Spleen (tissue), 13 donors: ENCODE measurements at regions of chr14 and their contacts with region 1.

Region 1: DNA sequence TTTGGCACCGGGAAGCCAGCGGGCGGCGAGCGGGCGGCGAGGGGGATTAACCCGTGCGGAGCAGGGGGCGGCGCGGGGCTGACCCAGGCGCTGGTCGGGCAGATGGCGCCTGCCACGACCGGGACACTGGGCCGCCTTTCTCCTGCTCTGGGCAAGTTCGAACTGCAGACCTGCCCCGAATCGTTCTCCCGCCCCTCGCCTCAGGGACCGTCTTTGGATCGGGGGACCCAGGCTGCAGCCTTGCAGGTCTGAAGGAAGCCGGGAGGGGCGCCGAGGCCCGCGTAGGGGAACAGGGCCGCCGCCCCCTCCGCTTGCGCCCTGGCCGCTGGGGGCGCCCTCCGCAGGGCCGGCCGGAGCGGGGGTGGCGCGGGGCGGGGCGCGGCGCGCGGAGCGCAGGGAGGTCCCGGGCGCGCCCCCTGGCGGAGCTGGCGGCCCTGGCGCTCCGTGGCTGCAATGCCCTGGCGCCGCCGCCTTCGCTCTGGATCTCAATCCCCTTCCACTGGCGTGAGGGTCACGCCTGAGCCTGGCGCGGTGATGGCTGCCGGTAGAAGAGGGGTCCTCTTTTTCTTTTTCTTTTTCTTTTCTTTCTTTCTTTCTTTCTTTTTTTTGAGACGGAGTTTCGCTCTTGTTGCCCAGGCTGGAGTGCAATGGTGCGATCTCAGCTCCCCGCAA is 449 bp upstream of the LTBP2 start:
- DNase-seq: peak; percentile 96
- H3K4me3 ChIP-seq: peak overlapping the region; percentile 66 to 96 (median 80)
- H3K27ac ChIP-seq: peak overlapping the region in 3 of 8 donors; percentile 55 to 74 (median 57)
- H3K4me1 ChIP-seq: peaks cover 13 to 78% (median 50%) of the 10 kb centered on the region in 6 donors
- H3K27me3 ChIP-seq: peaks cover 0 to 40% (median 18%) of the 10 kb centered on the region in 7 donors
- CTCF ChIP-seq: peak; percentile 27 to 91 (median 66)
- POLR2A ChIP-seq: no peak

Region 2: DNA sequence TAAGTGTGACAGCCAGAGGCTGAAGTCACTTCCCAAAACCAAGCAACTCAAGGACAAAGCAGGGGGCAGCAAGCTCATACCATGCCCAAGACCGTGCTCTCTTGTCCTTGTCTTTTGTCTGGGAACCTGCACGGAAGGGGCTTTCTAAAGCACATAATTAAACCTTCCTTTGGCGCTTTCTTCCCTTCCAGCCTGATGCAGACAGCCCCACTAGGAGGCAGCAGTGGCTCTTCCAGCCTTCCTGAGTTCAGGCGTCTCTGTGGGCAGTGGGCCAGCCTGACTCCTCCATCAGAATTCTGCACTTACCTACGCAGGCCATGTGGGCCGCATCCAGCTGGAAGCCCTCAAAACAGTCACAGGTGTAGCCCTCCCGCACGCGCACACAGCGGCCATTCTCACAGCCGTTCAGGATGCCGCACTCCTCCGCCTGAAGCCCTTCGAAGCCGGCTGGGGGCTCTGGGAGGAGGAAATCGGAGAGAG is 111.3 kb before region 1 on chr14:
- intact Hi-C with region 1: loop called (anchors 5 kb)
- DNase-seq: no peak
- H3K4me3 ChIP-seq: no peak overlapping the region
- H3K27ac ChIP-seq: no peak overlapping the region
- H3K4me1 ChIP-seq: peaks cover 0 to 17% (median 9%) of the 10 kb centered on the region in 6 donors
- H3K27me3 ChIP-seq: no peaks in the 10 kb centered on the region
- CTCF ChIP-seq: peak in 10 of 11 experiments; percentile 20 to 65 (median 53)
- POLR2A ChIP-seq: no peak

Region 3: GRCh38 chr14:74804219-74804826 is 191.8 kb after region 1 on chr14:
- intact Hi-C with region 1: loop called (anchors 10 kb)
- DNase-seq: no peak
- H3K4me3 ChIP-seq: no peak overlapping the region
- H3K27ac ChIP-seq: no peak overlapping the region
- H3K4me1 ChIP-seq: peaks cover 0 to 15% (median 0%) of the 10 kb centered on the region in 6 donors
- H3K27me3 ChIP-seq: no peaks in the 10 kb centered on the region
- CTCF ChIP-seq: peak in 9 of 11 experiments; percentile 34 to 58 (median 43)
- POLR2A ChIP-seq: no peak